Breast epithelium (tissue), 4 donors: ENCODE measurements at regions of chr6 and their contacts with region 1.

Region 1: DNA sequence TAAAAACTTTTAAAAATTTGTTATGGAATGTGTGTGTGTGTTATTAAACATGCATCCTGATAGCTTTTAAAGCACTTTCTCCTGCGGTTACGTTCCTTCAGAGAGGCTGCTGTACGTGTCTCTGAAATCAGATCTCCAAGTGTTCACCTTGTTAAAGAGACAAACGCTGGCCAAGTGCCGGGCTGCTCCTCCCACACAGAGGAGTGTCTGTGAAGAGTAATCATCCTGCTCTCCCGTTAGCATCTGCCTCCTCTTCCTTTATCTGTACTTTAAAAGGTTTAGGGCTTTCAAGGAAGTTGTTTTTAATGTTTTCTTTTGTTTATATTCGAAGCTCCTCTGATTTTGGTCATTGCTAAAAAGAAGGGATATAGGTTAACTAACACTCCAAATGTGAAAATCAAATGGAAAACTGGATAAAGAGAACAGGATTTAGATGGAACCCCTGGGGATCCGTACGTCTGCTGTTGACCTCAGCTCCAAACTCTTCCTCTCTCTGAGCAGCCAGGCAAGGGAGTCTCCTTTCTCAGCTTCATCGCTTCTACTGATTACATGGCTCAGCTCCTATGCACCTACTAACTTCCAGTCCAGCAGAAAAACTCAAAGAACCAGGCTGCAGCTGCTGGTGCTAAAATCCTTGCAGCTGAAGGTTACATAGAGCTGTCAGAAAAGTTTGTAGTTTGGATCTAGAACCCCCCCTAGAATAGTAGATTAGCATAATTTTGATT is 20.0 kb downstream of the IRF4 start:
- DNase-seq: no peak
- H3K4me3 ChIP-seq: no peak overlapping the region
- H3K27ac ChIP-seq: no peak overlapping the region
- H3K4me1 ChIP-seq: no peaks in the 10 kb centered on the region
- H3K27me3 ChIP-seq: peaks cover 0 to 4% of the 10 kb centered on the region in 2 donors
- CTCF ChIP-seq: no peak
- POLR2A ChIP-seq: no peak

Region 2: DNA sequence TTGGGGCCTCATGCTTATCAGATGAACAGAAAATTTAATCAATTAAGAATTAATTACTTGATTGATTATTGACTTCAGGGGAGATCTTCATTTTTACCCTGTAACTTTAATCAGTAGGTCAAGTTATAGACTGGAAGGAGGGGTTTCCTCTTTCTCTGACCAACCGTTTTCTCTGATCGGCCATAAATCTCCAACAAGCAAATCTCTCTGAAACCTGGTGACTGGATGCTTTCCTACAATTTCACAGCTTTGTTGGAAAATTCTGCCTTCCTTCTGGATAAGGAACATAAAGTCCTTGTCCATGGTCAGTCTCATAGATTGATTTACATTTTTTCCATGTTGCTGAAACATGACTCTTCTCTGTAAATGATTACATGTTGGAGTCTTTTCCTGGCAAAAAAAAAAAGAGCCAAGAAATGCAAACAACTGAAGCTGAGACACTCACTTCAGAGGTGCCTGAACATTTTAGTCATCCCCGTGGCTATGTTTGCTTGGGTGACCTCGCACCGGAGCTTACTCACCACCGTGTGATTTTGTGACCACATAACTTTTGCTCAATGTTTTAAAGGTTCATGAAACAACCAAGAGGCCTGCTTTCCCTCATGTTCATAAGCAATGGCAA is 11.0 kb after region 1 on chr6:
- intact Hi-C with region 1: no loop called
- DNase-seq: no peak
- H3K4me3 ChIP-seq: no peak overlapping the region
- H3K27ac ChIP-seq: peak overlapping the region in 1 of 2 donors; percentile 3
- H3K4me1 ChIP-seq: no peaks in the 10 kb centered on the region
- H3K27me3 ChIP-seq: peaks cover 0 to 6% of the 10 kb centered on the region in 2 donors
- CTCF ChIP-seq: no peak
- POLR2A ChIP-seq: no peak

Region 3: GRCh38 chr6:474453-475185 is 63.0 kb after region 1 on chr6:
- intact Hi-C with region 1: loop called (anchors 10 kb)
- DNase-seq: no peak
- H3K4me3 ChIP-seq: no peak overlapping the region
- H3K27ac ChIP-seq: no peak overlapping the region
- H3K4me1 ChIP-seq: no peaks in the 10 kb centered on the region
- H3K27me3 ChIP-seq: peaks cover 0 to 3% of the 10 kb centered on the region in 2 donors
- CTCF ChIP-seq: no peak
- POLR2A ChIP-seq: no peak